ENCODE measurements at regions of chr12 and their contacts with region 1.

Region 1: DNA sequence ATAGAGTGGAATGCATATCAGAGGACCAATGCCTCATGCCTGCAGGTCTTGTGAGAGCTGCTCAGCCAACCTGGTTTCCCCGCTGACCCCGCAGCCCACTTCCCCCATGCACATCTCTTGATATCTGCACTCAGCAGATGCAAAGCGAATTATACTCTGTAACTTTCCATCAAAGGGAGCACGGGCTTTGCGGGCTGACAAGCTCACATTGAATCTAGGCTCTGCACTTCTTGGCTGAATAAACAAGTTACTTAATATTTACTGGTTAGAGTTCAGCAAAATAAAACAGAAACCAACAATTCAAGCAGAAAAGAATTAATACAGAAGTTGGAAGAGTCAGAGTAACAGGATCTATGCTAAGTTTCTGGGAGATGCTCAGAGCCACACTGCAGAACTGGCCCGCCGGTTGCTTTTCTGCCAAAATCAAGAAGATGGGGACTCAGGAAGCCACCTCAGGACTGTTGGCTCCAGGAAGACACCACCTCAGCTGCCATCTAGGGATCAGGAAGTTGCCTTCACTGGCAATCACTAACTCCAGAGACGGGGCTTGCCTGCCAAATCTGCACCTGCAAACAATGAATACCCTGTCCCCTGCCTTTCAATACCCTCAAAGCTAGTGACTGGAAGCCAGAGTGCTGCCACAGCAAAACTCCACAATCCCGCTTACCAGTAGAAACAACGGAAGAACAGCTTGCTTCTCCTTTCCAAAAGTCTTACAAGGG is 46.5 kb downstream of the NR1H4 start:
- DNase-seq: no peak
- H3K4me3 ChIP-seq: no peak overlapping the region
- H3K27ac ChIP-seq: no peak overlapping the region
- H3K4me1 ChIP-seq: no peaks in the 10 kb centered on the region
- H3K27me3 ChIP-seq: peaks cover 23% of the 10 kb centered on the region
- CTCF ChIP-seq: no peak

Region 2: GRCh38 chr12:100661300-100661951 is 141.2 kb after region 1 on chr12:
- CTCF ChIA-PET with region 1: interaction called, 15 read pairs
- POLR2A ChIA-PET with region 1: no interaction called
- intact Hi-C with region 1: no loop called
- DNase-seq: no peak
- H3K4me3 ChIP-seq: no peak overlapping the region
- H3K27ac ChIP-seq: no peak overlapping the region
- H3K4me1 ChIP-seq: no peaks in the 10 kb centered on the region
- H3K27me3 ChIP-seq: peaks cover 58% of the 10 kb centered on the region
- CTCF ChIP-seq: no peak